Naive thymus-derived CD8-positive, alpha-beta T cell (primary cell): ENCODE measurements at regions of chr17 and their contacts with region 1.

Region 1: DNA sequence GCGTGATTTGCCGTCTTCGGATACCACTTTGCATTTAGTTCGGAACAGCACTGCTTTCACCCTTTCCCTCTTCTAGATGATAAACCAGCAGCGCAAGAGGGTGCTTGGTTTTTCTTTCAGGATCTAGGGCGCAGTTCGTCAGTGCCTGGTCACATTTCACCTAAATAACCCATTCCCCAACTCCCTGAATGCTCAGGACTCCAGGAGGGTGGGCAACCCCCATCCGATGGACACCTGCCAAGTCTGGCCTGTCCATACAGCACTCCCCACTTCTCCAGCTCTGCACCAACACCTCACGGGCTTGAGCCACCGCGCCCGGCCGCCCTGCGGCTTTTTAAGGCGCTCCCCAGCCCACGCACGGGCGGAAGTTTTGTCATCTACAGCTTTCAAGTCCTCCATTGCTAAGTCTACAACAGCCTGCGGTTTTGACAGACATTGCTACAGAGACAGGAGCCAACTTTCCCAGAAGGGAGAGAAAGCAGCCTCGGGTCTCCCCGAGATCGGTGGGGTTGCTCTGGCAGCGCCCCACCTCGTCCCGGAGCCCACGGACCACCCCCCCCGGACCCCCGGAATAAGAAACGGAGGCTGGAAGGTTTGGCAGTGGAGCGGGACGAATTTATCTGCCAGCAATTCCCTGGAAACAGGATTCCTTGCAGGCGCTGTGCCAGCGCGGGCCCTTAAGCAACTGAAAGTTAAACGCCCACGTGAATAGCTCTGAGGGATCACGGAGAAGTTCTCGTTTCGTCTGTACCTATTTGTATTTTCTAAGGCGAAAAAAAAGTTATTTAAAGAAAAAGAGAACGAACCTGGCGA is 38.6 kb upstream of the SLFN13 start:
- DNase-seq: peak; percentile 53 to 85 (median 70)
- ATAC-seq: peak; percentile 80 to 86
- H3K4me3 Mint-ChIP-seq: peak overlapping the region; percentile 86 to 98 (median 96)
- H3K27ac Mint-ChIP-seq: peak overlapping the region; percentile 96 to 99 (median 98)
- H3K4me1 Mint-ChIP-seq: peaks cover 21 to 64% (median 60%) of the 10 kb centered on the region in 4 donors
- H3K27me3 Mint-ChIP-seq: peaks cover 0 to 16% (median 0%) of the 10 kb centered on the region in 5 donors

Region 2: GRCh38 chr17:35312790-35313711 is 174.1 kb before region 1 on chr17:
- POLR2A ChIA-PET with region 1: interaction called, 21 read pairs
- DNase-seq: peak; percentile 65 to 97 (median 94)
- ATAC-seq: peak; percentile 87 to 91
- H3K4me3 Mint-ChIP-seq: peak overlapping the region; percentile 91 to 100 (median 96)
- H3K27ac Mint-ChIP-seq: peak overlapping the region; percentile 97 to 99 (median 98)
- H3K4me1 Mint-ChIP-seq: peaks cover 39 to 63% (median 54%) of the 10 kb centered on the region in 4 donors
- H3K27me3 Mint-ChIP-seq: no peaks in the 10 kb centered on the region

Region 3: GRCh38 chr17:35448214-35448898 is 38.8 kb before region 1 on chr17 and contains the start of gene SLFN13:
- POLR2A ChIA-PET with region 1: interaction called, 30 read pairs
- DNase-seq: peak; percentile 68 to 90 (median 80)
- ATAC-seq: peak; percentile 96 to 97
- H3K4me3 Mint-ChIP-seq: peak within 1 kb of the TSS; percentile 77 to 92 (median 86)
- H3K27ac Mint-ChIP-seq: peak within 1 kb of the TSS; percentile 82 to 94 (median 92)
- H3K4me1 Mint-ChIP-seq: peaks cover 2 to 28% (median 17%) of the 10 kb centered on the region in 4 donors
- H3K27me3 Mint-ChIP-seq: no peaks in the 10 kb centered on the region
- polyA plus RNA-seq, gene SLFN13: 3.2 to 9.5 (median 3.4) TPM

Region 4: DNA sequence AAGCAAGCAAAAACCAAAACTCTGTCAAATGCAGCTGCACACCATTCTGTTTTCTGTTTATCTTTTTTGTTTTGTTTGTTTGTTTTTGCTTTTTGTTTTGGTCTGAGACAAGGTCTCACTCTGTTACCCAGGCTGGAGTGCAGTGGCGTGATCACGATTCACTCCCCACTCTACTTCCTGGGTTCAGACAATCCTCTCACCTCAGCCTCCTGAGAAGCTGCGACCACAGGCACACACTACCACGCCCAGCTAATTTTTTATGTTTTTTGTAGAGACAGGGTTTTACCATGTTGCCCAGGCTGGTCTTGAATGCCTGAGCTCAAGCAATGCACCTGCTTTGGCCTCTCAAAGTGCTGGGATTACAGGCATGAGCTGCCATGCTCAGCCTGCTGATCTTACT is 19.3 kb before region 1 on chr17:
- POLR2A ChIA-PET with region 1: interaction called, 38 read pairs
- DNase-seq: peak in 4 of 10 donors; percentile 14 to 41 (median 37)
- ATAC-seq: peak; percentile 86 to 96
- H3K4me3 Mint-ChIP-seq: peak overlapping the region in 9 of 10 donors; percentile 26 to 74 (median 55)
- H3K27ac Mint-ChIP-seq: peak overlapping the region; percentile 74 to 90 (median 85)
- H3K4me1 Mint-ChIP-seq: peaks cover 18 to 48% (median 45%) of the 10 kb centered on the region in 4 donors
- H3K27me3 Mint-ChIP-seq: no peaks in the 10 kb centered on the region

Region 5: GRCh38 chr17:35519439-35519838 is 32.3 kb after region 1 on chr17:
- POLR2A ChIA-PET with region 1: interaction called, 35 read pairs
- DNase-seq: no peak
- ATAC-seq: no peak
- H3K4me3 Mint-ChIP-seq: peak overlapping the region in 9 of 10 donors; percentile 30 to 70 (median 66)
- H3K27ac Mint-ChIP-seq: peak overlapping the region in 9 of 10 donors; percentile 21 to 95 (median 78)
- H3K4me1 Mint-ChIP-seq: peaks cover 54 to 97% (median 90%) of the 10 kb centered on the region in 4 donors
- H3K27me3 Mint-ChIP-seq: peaks cover 0 to 2% (median 0%) of the 10 kb centered on the region in 5 donors

Region 6: GRCh38 chr17:35540589-35541404 is 53.7 kb after region 1 on chr17:
- POLR2A ChIA-PET with region 1: interaction called, 49 read pairs
- DNase-seq: peak in 3 of 10 donors; percentile 13 to 38 (median 33)
- ATAC-seq: peak; percentile 37
- H3K4me3 Mint-ChIP-seq: peak overlapping the region; percentile 70 to 98 (median 89)
- H3K27ac Mint-ChIP-seq: peak overlapping the region; percentile 80 to 100 (median 95)
- H3K4me1 Mint-ChIP-seq: peaks cover 18 to 62% (median 51%) of the 10 kb centered on the region in 4 donors
- H3K27me3 Mint-ChIP-seq: no peaks in the 10 kb centered on the region

Region 7: GRCh38 chr17:35587074-35587971 is 100.2 kb after region 1 on chr17 and contains the start of gene AP2B1:
- POLR2A ChIA-PET with region 1: no interaction called
- DNase-seq: peak; percentile 87 to 100 (median 97)
- ATAC-seq: peak; percentile 99
- H3K4me3 Mint-ChIP-seq: peak within 1 kb of the TSS; percentile 96 to 100 (median 98)
- H3K27ac Mint-ChIP-seq: peak within 1 kb of the TSS; percentile 97 to 100 (median 99)
- H3K4me1 Mint-ChIP-seq: peaks cover 18 to 51% (median 37%) of the 10 kb centered on the region in 4 donors
- H3K27me3 Mint-ChIP-seq: peaks cover 0 to 2% (median 0%) of the 10 kb centered on the region in 5 donors
- polyA plus RNA-seq, gene AP2B1: 50.3 to 65.7 (median 52.0) TPM

Region 8: GRCh38 chr17:35713069-35713728 is 226.1 kb after region 1 on chr17:
- POLR2A ChIA-PET with region 1: no interaction called
- DNase-seq: no peak
- ATAC-seq: peak; percentile 23 to 49
- H3K4me3 Mint-ChIP-seq: no peak overlapping the region
- H3K27ac Mint-ChIP-seq: peak overlapping the region in 1 of 10 donors; percentile 43
- H3K4me1 Mint-ChIP-seq: peaks cover 7 to 22% (median 17%) of the 10 kb centered on the region in 4 donors
- H3K27me3 Mint-ChIP-seq: no peaks in the 10 kb centered on the region